Esophagus muscularis mucosa (tissue), 4 donors: ENCODE measurements at regions of chr14 and their contacts with region 1.

Region 1: DNA sequence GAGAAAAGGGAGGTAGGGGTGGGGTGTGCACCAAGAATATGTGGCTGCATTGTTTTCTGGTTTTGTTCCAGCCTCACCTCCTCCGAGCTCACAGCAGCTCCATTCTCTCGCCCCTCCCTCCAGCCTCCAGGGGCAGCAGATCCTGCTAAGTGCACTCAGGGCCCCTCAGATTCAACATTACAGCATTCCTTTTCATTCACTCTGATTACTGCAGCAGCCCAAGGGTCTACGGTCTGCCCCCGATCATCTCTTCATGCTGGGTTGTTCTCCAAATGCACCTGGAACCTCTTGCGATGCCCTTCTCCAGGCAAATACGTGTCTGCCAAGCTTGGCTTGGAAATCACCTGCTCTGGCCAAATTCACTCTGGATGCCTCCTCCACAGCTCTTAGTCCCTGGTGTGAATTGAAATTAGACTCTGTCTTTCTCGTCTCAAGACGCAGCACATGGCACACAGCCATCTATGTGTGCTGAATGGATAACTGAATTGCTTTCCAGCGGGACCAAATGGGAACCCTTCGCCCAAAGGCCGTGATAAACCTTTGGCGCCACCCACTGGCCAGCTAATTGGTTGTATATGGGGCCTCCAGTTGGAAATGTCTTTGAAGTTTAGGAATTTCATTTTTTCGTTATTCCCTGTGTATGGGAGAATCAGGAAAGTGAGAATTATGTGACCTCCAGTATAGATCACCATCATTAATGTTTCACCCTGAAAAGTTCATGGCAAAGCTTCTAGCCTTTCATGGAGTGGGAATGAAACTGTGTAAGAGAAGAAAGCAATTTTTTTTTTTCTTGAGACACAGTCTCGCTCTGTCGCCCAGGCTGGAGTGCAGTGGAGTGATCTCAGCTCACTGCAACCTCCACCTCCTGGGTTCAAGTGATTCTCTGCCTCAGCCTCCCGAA is 9.6 kb upstream of the HSP90AA1 start:
- DNase-seq: no peak
- H3K4me3 ChIP-seq: no peak overlapping the region
- H3K27ac ChIP-seq: peak overlapping the region in 1 of 4 donors; percentile 4
- H3K4me1 ChIP-seq: peaks cover 3 to 12% (median 8%) of the 10 kb centered on the region in 4 donors
- H3K27me3 ChIP-seq: no peaks in the 10 kb centered on the region
- CTCF ChIP-seq: peak; percentile 73 to 87 (median 82)
- EP300 ChIP-seq: no peak
- POLR2A ChIP-seq: no peak

Region 2: DNA sequence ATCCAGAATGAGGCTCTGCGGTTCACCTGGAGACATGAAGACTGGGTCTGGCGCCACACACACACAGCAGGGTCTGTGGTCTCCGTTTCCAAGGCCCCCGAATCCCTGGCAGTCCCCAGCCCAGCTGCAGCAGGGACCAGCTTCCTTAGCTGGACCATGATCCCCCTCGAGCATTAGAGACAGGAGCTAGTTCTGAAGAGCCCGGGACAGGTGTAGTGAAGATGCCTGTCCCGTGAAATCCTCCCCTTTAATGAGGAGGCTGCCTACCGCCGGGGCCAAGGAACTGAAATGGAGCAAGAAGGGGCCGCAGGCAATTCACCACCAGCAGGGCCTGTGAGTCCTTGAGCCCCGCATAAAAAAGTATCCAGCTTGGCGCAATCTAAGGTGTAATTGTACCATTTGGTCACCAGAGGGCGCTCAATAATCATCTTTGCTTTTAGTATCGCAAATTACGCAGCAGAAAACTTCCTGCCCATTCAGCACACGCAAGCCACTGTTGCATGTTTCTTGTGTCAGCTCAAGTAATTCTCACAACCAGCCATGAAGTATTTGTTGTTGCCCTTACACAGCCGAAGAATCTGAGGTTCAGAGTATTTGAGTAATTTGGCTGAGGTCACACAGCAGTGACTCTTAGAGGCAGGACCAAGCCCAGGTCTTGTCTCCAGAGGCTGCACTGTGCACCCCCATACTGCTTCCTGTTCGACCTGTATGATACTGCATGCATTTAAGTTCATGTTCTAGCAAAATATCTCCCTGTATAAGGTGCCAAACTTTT is 389.2 kb before region 1 on chr14:
- intact Hi-C with region 1: loop called (anchors 2 kb)
- DNase-seq: peak; percentile 93
- H3K4me3 ChIP-seq: peak overlapping the region in 2 of 4 donors; percentile 1 to 31
- H3K27ac ChIP-seq: peak overlapping the region; percentile 66 to 76 (median 72)
- H3K4me1 ChIP-seq: peaks cover 20 to 27% (median 26%) of the 10 kb centered on the region in 4 donors
- H3K27me3 ChIP-seq: peaks cover 0 to 29% (median 4%) of the 10 kb centered on the region in 4 donors
- CTCF ChIP-seq: peak; percentile 78 to 86 (median 85)
- EP300 ChIP-seq: no peak
- POLR2A ChIP-seq: no peak

Region 3: DNA sequence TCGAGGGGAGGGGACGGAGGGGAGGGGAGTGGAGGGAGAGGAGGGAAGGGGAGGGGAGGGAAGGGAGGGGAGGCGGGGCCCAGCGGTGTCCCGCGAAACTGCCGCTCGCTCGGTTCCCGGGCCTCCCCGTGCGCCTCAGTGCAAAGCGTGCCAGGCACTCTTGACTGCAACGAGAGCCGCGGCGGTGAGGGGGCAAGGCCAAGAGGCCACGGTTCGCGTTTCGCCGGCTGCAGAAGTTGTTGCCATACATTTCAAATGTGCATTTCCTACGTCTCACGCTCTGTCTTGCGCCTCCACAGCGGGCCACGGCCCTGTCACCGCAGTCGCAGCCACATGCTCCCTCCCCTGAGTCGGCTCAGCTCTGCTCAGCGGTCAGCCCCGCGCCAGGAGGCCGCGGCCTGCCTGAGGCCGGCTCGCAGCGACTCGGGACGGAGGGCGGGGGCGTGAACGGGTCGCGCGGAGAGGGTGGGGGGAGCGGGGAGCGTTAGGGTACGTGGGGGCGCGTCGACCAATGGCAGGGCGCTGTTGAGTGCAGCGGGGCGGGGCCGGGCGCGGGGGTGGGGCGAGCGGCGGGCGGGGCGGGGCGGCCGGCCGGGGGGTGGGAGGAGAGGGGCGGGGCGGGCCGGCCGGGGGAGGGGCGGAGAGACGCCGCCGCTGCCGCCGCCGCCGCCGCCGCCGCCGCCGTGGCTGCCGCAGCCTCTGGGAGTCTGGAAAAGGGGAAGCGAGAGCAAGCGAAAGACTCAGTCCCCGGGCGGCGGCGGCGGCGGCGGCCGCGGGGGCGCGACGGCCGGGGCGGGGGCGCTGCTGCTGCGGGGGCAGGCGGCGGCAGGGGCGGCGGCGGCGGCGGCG is 335.2 kb before region 1 on chr14 and contains the start of gene PPP2R5C:
- intact Hi-C with region 1: loop called (anchors 10 kb)
- DNase-seq: peak; percentile 95
- H3K4me3 ChIP-seq: peak within 1 kb of the TSS; percentile 82 to 99 (median 92)
- H3K27ac ChIP-seq: peak within 1 kb of the TSS; percentile 81 to 99 (median 96)
- H3K4me1 ChIP-seq: peaks cover 18 to 46% (median 35%) of the 10 kb centered on the region in 4 donors
- H3K27me3 ChIP-seq: no peaks in the 10 kb centered on the region
- CTCF ChIP-seq: no peak
- EP300 ChIP-seq: no peak
- POLR2A ChIP-seq: peak; percentile 65
- total RNA-seq, gene PPP2R5C: 103 to 142 (median 131) TPM

Region 4: GRCh38 chr14:101964297-101965144 is 131.9 kb before region 1 on chr14 and contains the start of gene DYNC1H1:
- intact Hi-C with region 1: loop called (anchors 2 kb)
- DNase-seq: peak; percentile 98
- H3K4me3 ChIP-seq: peak within 1 kb of the TSS; percentile 97 to 100 (median 100)
- H3K27ac ChIP-seq: peak within 1 kb of the TSS; percentile 98 to 99 (median 99)
- H3K4me1 ChIP-seq: peaks cover 39 to 78% (median 70%) of the 10 kb centered on the region in 4 donors
- H3K27me3 ChIP-seq: no peaks in the 10 kb centered on the region
- CTCF ChIP-seq: no peak
- EP300 ChIP-seq: no peak
- POLR2A ChIP-seq: peak; percentile 97
- total RNA-seq, gene DYNC1H1: 608 to 897 (median 728) TPM

Region 5: GRCh38 chr14:102046343-102047278 is 49.9 kb before region 1 on chr14:
- intact Hi-C with region 1: loop called (anchors 5 kb)
- DNase-seq: peak; percentile 94
- H3K4me3 ChIP-seq: no peak overlapping the region
- H3K27ac ChIP-seq: peak overlapping the region; percentile 5 to 63 (median 30)
- H3K4me1 ChIP-seq: peaks cover 9 to 36% (median 32%) of the 10 kb centered on the region in 4 donors
- H3K27me3 ChIP-seq: no peaks in the 10 kb centered on the region
- CTCF ChIP-seq: peak; percentile 39 to 49 (median 41)
- EP300 ChIP-seq: no peak
- POLR2A ChIP-seq: no peak

Region 6: GRCh38 chr14:102063091-102063802 is 33.2 kb before region 1 on chr14:
- intact Hi-C with region 1: loop called (anchors 5 kb)
- DNase-seq: peak; percentile 97
- H3K4me3 ChIP-seq: peak overlapping the region in 1 of 4 donors; percentile 5
- H3K27ac ChIP-seq: peak overlapping the region in 3 of 4 donors; percentile 31 to 48 (median 40)
- H3K4me1 ChIP-seq: peaks cover 8 to 15% (median 14%) of the 10 kb centered on the region in 4 donors
- H3K27me3 ChIP-seq: no peaks in the 10 kb centered on the region
- CTCF ChIP-seq: peak; percentile 40 to 57 (median 56)
- EP300 ChIP-seq: no peak
- POLR2A ChIP-seq: no peak

Region 7: GRCh38 chr14:102116361-102117070 is 20.1 kb after region 1 on chr14:
- intact Hi-C with region 1: no loop called
- DNase-seq: no peak
- H3K4me3 ChIP-seq: no peak overlapping the region
- H3K27ac ChIP-seq: no peak overlapping the region
- H3K4me1 ChIP-seq: no peaks in the 10 kb centered on the region
- H3K27me3 ChIP-seq: no peaks in the 10 kb centered on the region
- CTCF ChIP-seq: no peak
- EP300 ChIP-seq: no peak
- POLR2A ChIP-seq: no peak

Region 8: DNA sequence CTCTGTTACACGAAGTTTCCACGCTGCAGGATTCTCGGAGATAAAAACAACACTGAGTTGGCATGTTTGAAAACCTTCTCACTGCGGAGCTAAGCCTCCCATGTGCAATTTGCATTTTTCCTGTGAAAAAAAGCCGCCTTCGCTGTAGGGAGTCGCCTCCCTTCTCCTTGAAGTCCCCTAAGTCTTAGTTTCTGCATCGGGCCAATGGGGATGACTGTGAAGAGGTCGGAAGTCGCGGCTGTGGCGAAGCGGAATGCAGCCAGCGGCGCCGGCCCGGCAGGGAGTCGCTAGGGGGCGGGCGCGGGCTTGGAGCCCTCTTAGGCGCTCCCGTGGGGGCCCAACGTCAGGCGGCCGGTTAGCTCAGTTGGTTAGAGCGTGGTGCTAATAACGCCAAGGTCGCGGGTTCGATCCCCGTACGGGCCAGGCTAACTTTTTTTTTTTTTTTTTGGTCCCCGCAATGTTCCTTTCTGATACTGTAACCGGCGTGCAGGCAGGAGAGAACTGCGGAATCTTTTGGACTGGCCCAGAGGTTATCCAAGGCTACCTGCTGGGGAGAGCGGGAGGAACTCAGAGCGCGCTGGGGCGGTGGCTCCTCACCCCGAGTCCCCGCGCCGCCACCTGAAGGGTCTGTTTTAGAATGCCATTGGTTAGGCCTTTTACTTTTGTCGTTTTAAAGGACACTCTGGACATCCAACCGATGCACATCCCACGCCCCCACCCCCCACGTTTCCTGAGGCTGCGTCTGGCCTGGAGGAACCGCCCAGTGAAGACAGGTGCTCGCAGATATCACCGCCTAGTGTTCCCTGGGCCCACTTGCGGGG is 220.5 kb after region 1 on chr14:
- intact Hi-C with region 1: loop called (anchors 10 kb)
- DNase-seq: peak; percentile 99
- H3K4me3 ChIP-seq: peak overlapping the region; percentile 50 to 62 (median 56)
- H3K27ac ChIP-seq: peak overlapping the region; percentile 96 to 98 (median 97)
- H3K4me1 ChIP-seq: peaks cover 40 to 72% (median 60%) of the 10 kb centered on the region in 4 donors
- H3K27me3 ChIP-seq: no peaks in the 10 kb centered on the region
- CTCF ChIP-seq: peak; percentile 73 to 89 (median 80)
- EP300 ChIP-seq: no peak
- POLR2A ChIP-seq: no peak